ENCODE measurements at regions of chr17 and their contacts with region 1.

Region 1: GRCh38 chr17:41688699-41689496 is at the start of gene EIF1:
- DNase-seq: peak; percentile 100
- ATAC-seq: peak; percentile 78
- H3K4me3 Mint-ChIP-seq: peak within 1 kb of the TSS; percentile 95
- H3K27ac Mint-ChIP-seq: peak within 1 kb of the TSS; percentile 99
- H3K4me1 Mint-ChIP-seq: peaks cover 39% of the 10 kb centered on the region
- H3K27me3 Mint-ChIP-seq: no peaks in the 10 kb centered on the region
- CTCF ChIP-seq: no peak
- total RNA-seq, gene EIF1: 843 and 900 TPM in 2 replicates

Region 2: DNA sequence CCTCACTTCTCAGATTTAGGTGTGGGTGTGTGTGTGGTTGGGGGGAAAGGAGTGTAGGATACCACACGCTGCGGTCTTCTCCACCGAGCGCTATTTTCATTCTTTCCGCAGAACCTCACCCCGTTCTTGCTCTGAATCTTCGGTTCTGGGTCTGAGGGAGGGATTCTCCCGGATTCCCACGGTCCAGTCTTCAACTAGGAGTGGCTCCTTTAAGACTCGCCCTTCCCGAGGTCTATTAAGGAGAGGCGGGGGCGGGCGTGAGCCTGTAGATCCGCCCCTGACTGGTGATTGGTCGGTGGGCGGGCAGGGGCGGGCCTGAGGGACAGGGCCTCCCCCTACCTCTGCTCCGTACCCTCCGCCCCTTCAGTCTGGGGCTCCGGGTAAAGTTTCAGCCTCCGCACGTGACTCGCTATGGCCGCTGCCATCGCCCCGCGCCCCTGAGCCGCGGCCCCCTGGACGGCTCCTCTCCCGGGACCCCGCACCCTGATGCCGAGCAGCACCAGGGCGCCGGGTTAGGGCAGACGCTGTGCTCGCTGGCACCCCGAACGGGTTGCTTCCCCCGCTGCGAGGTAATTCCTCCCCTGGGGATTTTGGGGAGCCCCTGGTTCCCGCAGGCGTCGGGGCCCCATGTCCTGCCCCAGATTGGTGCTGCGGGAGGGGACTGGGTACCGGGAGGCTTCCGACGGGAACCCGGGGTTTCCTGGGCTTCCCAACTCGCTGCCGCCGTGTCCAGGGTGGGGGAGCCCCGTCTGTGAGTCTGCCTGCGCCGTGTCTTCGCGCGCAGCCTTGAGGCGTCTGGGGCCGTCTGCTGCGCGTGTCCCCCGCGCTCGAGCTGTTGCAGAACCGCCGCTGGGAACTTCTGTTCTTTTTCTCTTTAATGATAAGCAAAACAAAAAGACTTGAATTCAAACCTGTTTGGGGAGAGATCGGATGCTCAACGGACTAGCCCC is 1370.7 kb before region 1 on chr17:
- CTCF ChIA-PET with region 1: no interaction called
- POLR2A ChIA-PET with region 1: interaction called, 14 read pairs
- intact Hi-C with region 1: no loop called
- DNase-seq: peak; percentile 88
- ATAC-seq: peak; percentile 65
- H3K4me3 Mint-ChIP-seq: peak overlapping the region; percentile 93
- H3K27ac Mint-ChIP-seq: peak overlapping the region; percentile 98
- H3K4me1 Mint-ChIP-seq: peaks cover 85% of the 10 kb centered on the region
- H3K27me3 Mint-ChIP-seq: no peaks in the 10 kb centered on the region
- CTCF ChIP-seq: no peak

Region 3: DNA sequence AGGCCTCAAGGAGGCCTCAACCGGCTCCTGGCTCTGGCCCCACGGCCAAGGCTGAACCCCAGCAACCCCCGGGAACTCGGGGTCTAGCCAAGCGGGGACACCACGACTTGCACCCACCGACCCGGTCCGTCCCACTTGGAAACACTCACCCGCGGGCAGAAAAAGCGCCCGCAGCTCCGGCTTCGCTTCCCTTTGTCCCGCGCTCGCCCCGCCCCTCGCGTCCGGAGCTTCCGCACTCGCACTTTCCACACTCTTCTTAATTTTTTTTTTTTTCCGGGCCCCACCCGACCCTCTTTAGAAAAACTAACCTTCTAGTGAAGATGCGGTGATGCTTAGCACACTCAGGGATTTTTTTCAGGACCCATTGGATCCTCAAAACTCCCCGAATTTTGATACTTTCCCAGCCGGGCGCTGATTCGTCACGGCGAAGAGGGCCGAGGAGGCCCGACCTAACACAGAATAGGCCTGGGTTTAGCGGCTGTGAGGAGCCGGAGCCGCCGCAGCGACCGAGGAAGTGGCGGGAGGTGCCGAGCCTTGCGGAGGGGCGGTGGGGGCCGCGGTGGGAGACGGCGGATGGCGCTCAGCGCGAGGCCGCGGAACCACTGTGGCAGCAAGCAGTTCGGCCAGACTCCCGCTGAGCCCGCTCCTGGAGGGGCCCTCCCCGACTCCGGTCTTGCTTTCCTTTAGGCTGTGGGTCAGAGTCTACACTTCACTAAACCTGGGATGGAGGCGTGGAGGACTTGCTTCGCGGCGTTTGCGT is 1041.1 kb before region 1 on chr17 and contains the start of gene SMARCE1:
- CTCF ChIA-PET with region 1: interaction called, 3 read pairs
- POLR2A ChIA-PET with region 1: interaction called, 12 read pairs
- intact Hi-C with region 1: no loop called
- DNase-seq: peak; percentile 75
- ATAC-seq: peak; percentile 84
- H3K4me3 Mint-ChIP-seq: peak within 1 kb of the TSS; percentile 98
- H3K27ac Mint-ChIP-seq: peak within 1 kb of the TSS; percentile 99
- H3K4me1 Mint-ChIP-seq: peaks cover 48% of the 10 kb centered on the region
- H3K27me3 Mint-ChIP-seq: no peaks in the 10 kb centered on the region
- CTCF ChIP-seq: no peak
- total RNA-seq, gene SMARCE1: 140 TPM in 2 replicates

Region 4: GRCh38 chr17:41579484-41580243 is 109.2 kb before region 1 on chr17:
- CTCF ChIA-PET with region 1: no interaction called
- POLR2A ChIA-PET with region 1: no interaction called
- intact Hi-C with region 1: no loop called
- DNase-seq: no peak
- ATAC-seq: peak; percentile 66
- H3K4me3 Mint-ChIP-seq: no peak overlapping the region
- H3K27ac Mint-ChIP-seq: no peak overlapping the region
- H3K4me1 Mint-ChIP-seq: no peaks in the 10 kb centered on the region
- H3K27me3 Mint-ChIP-seq: peaks cover 44% of the 10 kb centered on the region
- CTCF ChIP-seq: no peak

Region 5: GRCh38 chr17:41624208-41625101 is 64.4 kb before region 1 on chr17 and contains the start of gene KRT17:
- CTCF ChIA-PET with region 1: no interaction called
- POLR2A ChIA-PET with region 1: no interaction called
- intact Hi-C with region 1: no loop called
- DNase-seq: no peak
- ATAC-seq: no peak
- H3K4me3 Mint-ChIP-seq: no peak within 1 kb of the TSS
- H3K27ac Mint-ChIP-seq: no peak within 1 kb of the TSS
- H3K4me1 Mint-ChIP-seq: no peaks in the 10 kb centered on the region
- H3K27me3 Mint-ChIP-seq: peaks cover 20% of the 10 kb centered on the region
- CTCF ChIP-seq: no peak
- total RNA-seq, gene KRT17: not detected in 2 replicates

Region 6: GRCh38 chr17:41648411-41649195 is 40.3 kb before region 1 on chr17:
- CTCF ChIA-PET with region 1: interaction called, 9 read pairs
- POLR2A ChIA-PET with region 1: interaction called, 21 read pairs
- intact Hi-C with region 1: loop called (anchors 1 kb)
- DNase-seq: peak; percentile 85
- ATAC-seq: peak; percentile 91
- H3K4me3 Mint-ChIP-seq: peak overlapping the region; percentile 79
- H3K27ac Mint-ChIP-seq: peak overlapping the region; percentile 54
- H3K4me1 Mint-ChIP-seq: peaks cover 10% of the 10 kb centered on the region
- H3K27me3 Mint-ChIP-seq: no peaks in the 10 kb centered on the region
- CTCF ChIP-seq: peak; percentile 88

Region 7: GRCh38 chr17:41786227-41787020 is 97.5 kb after region 1 on chr17 and contains the start of gene JUP:
- CTCF ChIA-PET with region 1: no interaction called
- POLR2A ChIA-PET with region 1: interaction called, 27 read pairs
- intact Hi-C with region 1: loop called (anchors 5 kb)
- DNase-seq: peak; percentile 98
- ATAC-seq: peak; percentile 94
- H3K4me3 Mint-ChIP-seq: peak within 1 kb of the TSS; percentile 78
- H3K27ac Mint-ChIP-seq: peak within 1 kb of the TSS; percentile 75
- H3K4me1 Mint-ChIP-seq: peaks cover 57% of the 10 kb centered on the region
- H3K27me3 Mint-ChIP-seq: no peaks in the 10 kb centered on the region
- CTCF ChIP-seq: no peak
- total RNA-seq, gene JUP: 27.3 and 31.1 TPM in 2 replicates

Region 8: GRCh38 chr17:41864836-41865595 is 176.1 kb after region 1 on chr17 and contains the start of gene KLHL11:
- CTCF ChIA-PET with region 1: no interaction called
- POLR2A ChIA-PET with region 1: interaction called, 23 read pairs
- intact Hi-C with region 1: no loop called
- DNase-seq: peak; percentile 84
- ATAC-seq: peak; percentile 95
- H3K4me3 Mint-ChIP-seq: no peak within 1 kb of the TSS
- H3K27ac Mint-ChIP-seq: peak within 1 kb of the TSS; percentile 87
- H3K4me1 Mint-ChIP-seq: peaks cover 19% of the 10 kb centered on the region
- H3K27me3 Mint-ChIP-seq: no peaks in the 10 kb centered on the region
- CTCF ChIP-seq: no peak
- total RNA-seq, gene KLHL11: 13.6 and 17.3 TPM in 2 replicates

Region 9: GRCh38 chr17:42120770-42121769 is 432.2 kb after region 1 on chr17 and contains the start of gene KAT2A:
- CTCF ChIA-PET with region 1: no interaction called
- POLR2A ChIA-PET with region 1: no interaction called
- intact Hi-C with region 1: no loop called
- DNase-seq: peak; percentile 76
- ATAC-seq: peak; percentile 89
- H3K4me3 Mint-ChIP-seq: peak within 1 kb of the TSS; percentile 71
- H3K27ac Mint-ChIP-seq: peak within 1 kb of the TSS; percentile 30
- H3K4me1 Mint-ChIP-seq: peaks cover 32% of the 10 kb centered on the region
- H3K27me3 Mint-ChIP-seq: no peaks in the 10 kb centered on the region
- CTCF ChIP-seq: no peak
- total RNA-seq, gene KAT2A: 33.4 and 40.1 TPM in 2 replicates